ENCODE measurements at regions of chr3 and their contacts with region 1.

Region 1: DNA sequence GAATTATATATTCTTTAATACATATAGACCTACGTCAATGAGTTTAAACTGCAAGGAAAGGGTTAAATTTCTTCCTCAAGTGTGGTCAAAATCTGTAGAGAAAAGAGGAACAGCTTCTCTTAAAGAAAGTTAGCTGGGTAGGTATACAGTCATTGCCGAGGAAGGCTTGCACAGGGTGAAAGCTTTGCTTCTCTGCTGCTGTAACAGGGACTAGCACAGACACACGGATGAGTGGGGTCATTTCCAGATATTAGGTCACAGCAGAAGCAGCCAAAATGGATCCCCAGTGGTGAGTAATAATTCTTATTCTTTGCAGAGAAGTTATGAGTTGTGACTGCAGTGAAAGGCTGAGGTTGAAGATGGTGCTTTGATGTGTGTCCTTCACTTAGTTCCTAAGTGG is at the start of gene CD86:
- DNase-seq: no peak
- ATAC-seq: peak; percentile 94
- H3K4me3 Mint-ChIP-seq: peak within 1 kb of the TSS; percentile 84
- H3K27ac Mint-ChIP-seq: peak within 1 kb of the TSS; percentile 79
- H3K4me1 Mint-ChIP-seq: peaks cover 49% of the 10 kb centered on the region
- H3K27me3 Mint-ChIP-seq: no peaks in the 10 kb centered on the region
- CTCF ChIP-seq: no peak
- total RNA-seq, gene CD86: 31.2 and 31.7 TPM in 2 replicates

Region 2: DNA sequence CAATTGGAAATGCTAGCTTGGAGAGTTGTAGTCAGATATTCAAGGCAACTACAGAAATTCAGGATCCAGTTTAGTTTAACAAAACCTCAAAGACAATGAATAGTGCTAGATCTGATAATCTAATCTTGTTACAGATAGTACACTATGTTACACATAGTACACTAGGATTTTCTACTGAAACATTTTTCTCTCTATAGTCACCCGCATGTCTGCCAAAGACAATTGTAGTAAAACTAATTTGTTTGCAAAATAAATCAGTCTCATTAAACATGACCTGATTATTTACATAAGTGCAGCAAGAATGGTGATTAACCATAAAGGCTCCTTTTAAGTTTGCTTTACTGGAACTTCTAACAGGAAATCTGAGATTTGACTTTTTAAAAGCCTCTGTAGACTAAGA is 85.2 kb before region 1 on chr3:
- CTCF ChIA-PET with region 1: no interaction called
- POLR2A ChIA-PET with region 1: no interaction called
- intact Hi-C with region 1: no loop called
- DNase-seq: no peak
- ATAC-seq: no peak
- H3K4me3 Mint-ChIP-seq: no peak overlapping the region
- H3K27ac Mint-ChIP-seq: no peak overlapping the region
- H3K4me1 Mint-ChIP-seq: peaks cover 5% of the 10 kb centered on the region
- H3K27me3 Mint-ChIP-seq: no peaks in the 10 kb centered on the region
- CTCF ChIP-seq: no peak

Region 3: DNA sequence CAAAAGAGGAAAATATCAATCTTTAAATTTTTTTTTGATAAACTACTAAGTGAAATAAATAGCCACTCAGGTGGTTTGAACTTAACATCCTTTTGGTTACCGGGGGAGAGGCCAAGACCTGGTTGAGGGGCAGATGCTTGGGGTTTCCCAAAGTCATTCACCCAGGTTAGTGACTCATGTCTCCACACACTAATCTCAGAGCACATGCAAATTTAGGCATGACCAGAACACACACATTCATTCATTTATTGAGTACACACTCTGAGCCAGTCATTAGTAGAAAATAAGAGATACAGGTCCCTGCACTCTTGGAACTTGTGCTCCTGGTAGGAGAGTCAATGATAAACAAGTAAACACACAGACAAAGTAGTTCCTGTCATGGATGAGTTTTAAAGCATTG is 40.5 kb before region 1 on chr3:
- CTCF ChIA-PET with region 1: no interaction called
- POLR2A ChIA-PET with region 1: interaction called, 7 read pairs
- intact Hi-C with region 1: loop called (anchors 1 kb)
- DNase-seq: no peak
- ATAC-seq: peak; percentile 99
- H3K4me3 Mint-ChIP-seq: peak overlapping the region; percentile 5
- H3K27ac Mint-ChIP-seq: peak overlapping the region; percentile 56
- H3K4me1 Mint-ChIP-seq: peaks cover 44% of the 10 kb centered on the region
- H3K27me3 Mint-ChIP-seq: no peaks in the 10 kb centered on the region
- CTCF ChIP-seq: no peak

Region 4: GRCh38 chr3:122030381-122031122 is 24.7 kb before region 1 on chr3:
- CTCF ChIA-PET with region 1: no interaction called
- POLR2A ChIA-PET with region 1: interaction called, 14 read pairs
- intact Hi-C with region 1: loop called (anchors 1 kb)
- DNase-seq: no peak
- ATAC-seq: peak; percentile 81
- H3K4me3 Mint-ChIP-seq: peak overlapping the region; percentile 60
- H3K27ac Mint-ChIP-seq: peak overlapping the region; percentile 85
- H3K4me1 Mint-ChIP-seq: peaks cover 39% of the 10 kb centered on the region
- H3K27me3 Mint-ChIP-seq: no peaks in the 10 kb centered on the region
- CTCF ChIP-seq: no peak

Region 5: GRCh38 chr3:122074621-122075265 is 19.5 kb after region 1 on chr3:
- CTCF ChIA-PET with region 1: interaction called, 11 read pairs
- POLR2A ChIA-PET with region 1: interaction called, 35 read pairs
- intact Hi-C with region 1: loop called (anchors 1 kb)
- DNase-seq: peak; percentile 32
- ATAC-seq: peak; percentile 18
- H3K4me3 Mint-ChIP-seq: peak overlapping the region; percentile 62
- H3K27ac Mint-ChIP-seq: peak overlapping the region; percentile 89
- H3K4me1 Mint-ChIP-seq: peaks cover 74% of the 10 kb centered on the region
- H3K27me3 Mint-ChIP-seq: no peaks in the 10 kb centered on the region
- CTCF ChIP-seq: no peak

Region 6: DNA sequence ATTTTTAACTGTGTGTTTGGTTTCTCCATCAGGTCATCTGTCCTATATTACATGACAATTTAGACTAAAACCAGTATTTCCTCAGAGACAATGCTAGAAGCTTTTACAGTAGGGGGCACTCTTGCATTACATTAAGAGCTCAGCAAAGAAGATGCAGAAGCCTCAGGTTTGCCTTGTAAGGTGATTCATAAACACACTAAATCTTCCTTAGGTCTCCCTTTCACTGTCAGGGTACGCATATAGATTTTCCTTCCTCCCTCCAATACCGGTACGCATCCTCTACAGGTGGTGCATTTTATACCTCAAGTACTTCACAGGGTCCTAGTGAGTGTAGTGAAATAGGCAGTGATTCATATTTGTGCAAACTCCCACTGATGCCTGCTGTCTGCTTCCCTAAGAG is 46.4 kb after region 1 on chr3:
- CTCF ChIA-PET with region 1: interaction called, 7 read pairs
- POLR2A ChIA-PET with region 1: interaction called, 6 read pairs
- intact Hi-C with region 1: loop called (anchors 1 kb)
- DNase-seq: no peak
- ATAC-seq: peak; percentile 63
- H3K4me3 Mint-ChIP-seq: no peak overlapping the region
- H3K27ac Mint-ChIP-seq: peak overlapping the region; percentile 51
- H3K4me1 Mint-ChIP-seq: peaks cover 46% of the 10 kb centered on the region
- H3K27me3 Mint-ChIP-seq: no peaks in the 10 kb centered on the region
- CTCF ChIP-seq: no peak